AG04450 (cell line): ENCODE measurements at regions of chr20 and their contacts with region 1.

Region 1: GRCh38 chr20:45300961-45301360 is 5.7 kb upstream of the RBPJL start:
- DNase-seq: no peak
- H3K4me3 ChIP-seq: no peak overlapping the region
- H3K27ac ChIP-seq: no peak overlapping the region
- H3K27me3 ChIP-seq: peaks cover 11% of the 10 kb centered on the region
- CTCF ChIP-seq: peak; percentile 48

Region 2: GRCh38 chr20:45311589-45312211 is 10.7 kb after region 1 on chr20:
- CTCF ChIA-PET with region 1: interaction called, 11 read pairs
- POLR2A ChIA-PET with region 1: no interaction called
- DNase-seq: no peak
- H3K4me3 ChIP-seq: no peak overlapping the region
- H3K27ac ChIP-seq: no peak overlapping the region
- H3K27me3 ChIP-seq: peaks cover 42% of the 10 kb centered on the region
- CTCF ChIP-seq: peak; percentile 77